HEK293 (cell line): ENCODE measurements at regions of chr1 and their contacts with region 1.

Region 1: DNA sequence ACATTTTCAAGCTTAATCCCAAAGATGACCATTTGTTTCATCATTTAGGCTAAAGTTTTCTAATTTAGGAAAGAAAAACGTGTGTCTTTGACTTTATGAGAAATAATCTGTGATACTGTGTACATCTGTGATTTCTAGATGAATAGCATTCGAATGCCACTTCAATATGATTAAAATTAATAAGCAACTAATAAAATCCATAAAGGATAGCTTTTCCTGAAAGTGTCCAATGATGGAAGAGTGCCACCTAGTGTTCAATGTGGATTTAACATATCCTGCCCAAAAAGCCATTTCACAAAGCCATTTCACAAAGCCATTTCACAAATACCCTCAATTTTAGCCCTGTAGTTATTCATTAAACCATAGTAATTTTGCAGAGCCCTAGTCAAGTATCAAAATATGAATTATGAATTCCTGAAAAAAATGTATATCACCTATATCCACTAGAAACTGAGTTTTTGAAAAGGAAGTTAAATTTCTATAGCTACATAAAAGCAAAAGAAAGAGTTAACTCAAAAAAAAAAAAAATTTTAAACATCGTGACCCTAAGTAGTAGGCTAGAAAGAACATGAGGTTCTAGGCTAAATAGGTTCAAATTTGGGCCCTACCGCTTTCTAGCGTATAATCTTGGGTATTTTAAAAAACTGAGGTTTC is 19.1 kb downstream of the NME7 start:
- H3K4me3 ChIP-seq: no peak overlapping the region
- H3K27ac ChIP-seq: no peak overlapping the region
- H3K4me1 ChIP-seq: no peaks in the 10 kb centered on the region
- CTCF ChIP-seq: peak; percentile 51; the same call in 1 of the 2 replicates

Region 2: DNA sequence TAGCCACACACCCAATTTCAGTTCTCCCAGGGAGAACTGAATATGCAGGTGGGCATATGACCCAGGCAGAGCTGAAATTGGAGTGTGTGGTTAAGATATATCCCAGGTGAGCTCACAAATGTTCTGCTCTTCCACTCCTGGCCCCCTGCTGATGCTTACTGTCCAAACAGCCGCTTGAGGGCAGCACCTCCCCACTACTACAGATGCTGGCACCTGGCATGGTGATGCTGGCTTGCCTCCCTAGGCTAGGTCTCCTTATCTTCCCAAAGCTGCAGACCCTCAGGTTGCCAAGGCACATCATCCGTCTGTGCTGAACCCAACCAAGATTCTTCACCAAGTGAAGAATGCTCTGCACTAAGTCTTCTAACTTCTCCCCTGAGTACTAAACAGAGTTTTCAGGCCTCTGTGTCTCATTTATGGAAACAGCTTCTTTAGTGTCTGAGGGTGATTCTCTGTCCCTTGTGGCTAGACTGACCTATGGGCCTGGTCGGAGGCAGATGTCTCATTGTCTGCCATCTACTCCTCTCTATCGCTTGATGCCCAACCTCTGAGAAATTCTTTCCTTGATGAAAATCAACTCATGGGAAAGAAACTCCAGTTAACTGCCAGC is 744.9 kb before region 1 on chr1:
- CTCF ChIA-PET with region 1: interaction called, 72 read pairs
- POLR2A ChIA-PET with region 1: interaction called, 4 read pairs
- H3K4me3 ChIP-seq: no peak overlapping the region
- H3K27ac ChIP-seq: no peak overlapping the region
- H3K4me1 ChIP-seq: no peaks in the 10 kb centered on the region
- CTCF ChIP-seq: peak; percentile 86

Region 3: DNA sequence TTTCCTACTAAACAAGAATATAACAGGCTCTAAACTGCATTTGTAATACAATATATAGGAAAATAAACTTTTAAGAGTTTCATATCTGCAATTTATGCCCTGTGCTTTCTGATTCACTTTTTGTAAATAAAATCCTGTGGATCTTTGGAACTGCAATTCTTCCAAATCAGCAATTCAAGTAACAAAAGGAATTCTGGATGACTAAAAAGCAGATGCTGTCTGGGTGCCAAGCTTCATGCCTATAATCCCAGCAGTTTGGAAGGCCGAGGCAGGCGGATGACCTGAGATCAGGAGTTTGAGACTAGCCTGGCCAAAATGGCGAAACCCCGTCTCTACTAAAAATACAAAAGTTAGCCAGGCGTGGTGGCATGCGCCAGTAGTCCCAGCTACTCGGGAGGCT is 12.8 kb after region 1 on chr1:
- CTCF ChIA-PET with region 1: interaction called, 21 read pairs
- POLR2A ChIA-PET with region 1: no interaction called
- H3K4me3 ChIP-seq: no peak overlapping the region
- H3K27ac ChIP-seq: no peak overlapping the region
- H3K4me1 ChIP-seq: no peaks in the 10 kb centered on the region
- CTCF ChIP-seq: no peak

Region 4: DNA sequence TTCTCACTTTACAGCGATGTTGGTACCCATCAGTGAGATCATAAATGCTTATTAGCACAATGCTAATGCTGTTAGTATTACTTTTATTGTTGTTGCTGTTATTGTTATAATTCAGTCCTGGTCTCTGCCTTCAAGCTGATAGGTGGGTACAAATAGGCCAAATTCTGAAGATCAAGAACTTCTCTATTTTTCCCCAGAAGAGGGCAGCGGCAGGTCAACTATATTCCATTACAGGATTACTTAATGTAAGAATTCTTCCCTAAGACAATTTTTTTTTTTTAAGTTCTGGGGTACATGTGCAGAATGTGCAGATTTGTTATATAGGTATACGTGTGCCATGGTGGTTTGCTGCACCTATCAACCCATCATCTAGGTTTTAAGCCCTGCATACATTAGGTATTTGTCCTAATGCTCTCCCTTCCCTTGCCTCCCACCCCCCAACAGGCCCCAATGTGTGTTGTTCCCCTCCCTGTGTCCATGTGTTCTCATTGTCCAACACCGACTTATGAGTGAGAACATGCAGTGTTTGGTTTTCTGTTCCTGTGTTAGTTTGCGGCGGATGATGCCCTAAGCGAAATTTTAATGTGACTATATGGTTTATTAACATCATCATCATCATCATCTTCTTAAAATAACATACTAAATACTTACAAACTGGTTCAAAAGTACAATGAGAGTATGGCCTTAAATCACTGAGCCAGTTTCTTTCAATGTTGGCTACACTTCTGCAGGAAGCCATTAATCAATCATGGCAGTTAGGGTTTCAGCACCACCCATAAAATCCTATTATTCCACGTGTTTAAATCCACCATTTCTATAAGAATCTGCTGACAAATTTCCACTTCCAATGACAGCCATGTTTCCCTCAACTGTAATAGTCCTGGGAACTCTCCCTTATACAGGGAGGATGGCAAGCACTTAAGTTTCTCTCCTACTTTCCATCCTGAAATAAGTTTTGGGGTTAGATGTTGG is 118.0 kb after region 1 on chr1:
- CTCF ChIA-PET with region 1: no interaction called
- POLR2A ChIA-PET with region 1: no interaction called
- H3K4me3 ChIP-seq: no peak overlapping the region
- H3K27ac ChIP-seq: no peak overlapping the region
- H3K4me1 ChIP-seq: no peaks in the 10 kb centered on the region
- CTCF ChIP-seq: 0 out of 2 replicates have a peak, but pooled peaks have one; percentile 26

Region 5: GRCh38 chr1:169509351-169509750 is 160.8 kb after region 1 on chr1:
- CTCF ChIA-PET with region 1: no interaction called
- POLR2A ChIA-PET with region 1: no interaction called
- H3K4me3 ChIP-seq: no peak overlapping the region
- H3K27ac ChIP-seq: no peak overlapping the region
- H3K4me1 ChIP-seq: no peaks in the 10 kb centered on the region
- CTCF ChIP-seq: no peak